Heart left ventricle (tissue), 16 donors: ENCODE measurements at regions of chr12 and their contacts with region 1.

Region 1: GRCh38 chr12:110742718-110743570 is at the start of gene PPP1CC:
- DNase-seq: peak; percentile 94 to 97 (median 96)
- ATAC-seq: peak; percentile 86 to 96 (median 94)
- H3K4me3 ChIP-seq: peak within 1 kb of the TSS; percentile 64 to 100 (median 97)
- H3K27ac ChIP-seq: peak within 1 kb of the TSS; percentile 83 to 97 (median 94)
- H3K4me1 ChIP-seq: peaks cover 2 to 66% (median 46%) of the 10 kb centered on the region in 12 donors
- H3K27me3 ChIP-seq: no peaks in the 10 kb centered on the region
- CTCF ChIP-seq: peak in 3 of 12 donors; percentile 10 to 40 (median 21)
- POLR2A ChIP-seq: peak in 1 of 2 donors; percentile 79
- total RNA-seq, gene PPP1CC: 110 to 207 (median 150) TPM

Region 2: DNA sequence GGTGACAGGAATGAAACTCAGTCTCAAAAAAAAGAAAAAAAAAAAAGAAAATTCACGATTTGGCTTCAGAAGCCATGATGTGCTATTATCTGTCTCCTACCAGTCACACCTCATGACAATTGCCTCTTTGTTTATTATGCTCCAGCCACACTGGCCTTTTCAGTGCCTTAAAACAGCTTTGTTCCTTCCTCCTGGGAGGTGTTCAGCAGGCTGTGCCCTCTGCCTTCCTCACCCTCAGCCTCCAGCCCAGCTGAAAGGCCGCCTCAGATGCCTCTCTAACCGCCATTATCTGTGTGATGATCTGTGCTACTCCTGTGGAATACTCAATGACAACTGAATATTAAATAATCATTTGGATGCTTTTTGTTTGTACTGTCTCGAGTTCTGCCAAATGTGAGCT is 284.2 kb before region 1 on chr12:
- intact Hi-C with region 1: loop called in 1 of 10 experiments (anchors 5 kb)
- DNase-seq: no peak
- ATAC-seq: no peak
- H3K4me3 ChIP-seq: no peak overlapping the region
- H3K27ac ChIP-seq: no peak overlapping the region
- H3K4me1 ChIP-seq: peaks cover 0 to 22% (median 0%) of the 10 kb centered on the region in 12 donors
- H3K27me3 ChIP-seq: no peaks in the 10 kb centered on the region
- CTCF ChIP-seq: no peak
- POLR2A ChIP-seq: no peak

Region 3: GRCh38 chr12:110613771-110614684 is 128.9 kb before region 1 on chr12 and contains the start of gene TCTN1:
- intact Hi-C with region 1: loop called in 2 of 10 experiments (anchors 1 to 5 kb)
- DNase-seq: peak; percentile 97 to 99 (median 98)
- ATAC-seq: peak; percentile 98 to 100 (median 100)
- H3K4me3 ChIP-seq: peak within 1 kb of the TSS; percentile 24 to 93 (median 65)
- H3K27ac ChIP-seq: peak within 1 kb of the TSS in 11 of 12 donors; percentile 47 to 82 (median 67)
- H3K4me1 ChIP-seq: peaks cover 0 to 15% (median 7%) of the 10 kb centered on the region in 12 donors
- H3K27me3 ChIP-seq: no peaks in the 10 kb centered on the region
- CTCF ChIP-seq: peak in 4 of 12 donors; percentile 10 to 28 (median 21)
- POLR2A ChIP-seq: peak in 1 of 2 donors; percentile 69
- total RNA-seq, gene TCTN1: 17.3 to 27.7 (median 20.2) TPM

Region 4: GRCh38 chr12:110689281-110690126 is 53.4 kb before region 1 on chr12:
- intact Hi-C with region 1: loop called in 1 of 10 experiments (anchors 10 kb)
- DNase-seq: peak; percentile 71 to 85 (median 75)
- ATAC-seq: peak; percentile 68 to 73 (median 71)
- H3K4me3 ChIP-seq: peak overlapping the region; percentile 59 to 87 (median 74)
- H3K27ac ChIP-seq: peak overlapping the region; percentile 1 to 88 (median 80)
- H3K4me1 ChIP-seq: peaks cover 5 to 74% (median 24%) of the 10 kb centered on the region in 12 donors
- H3K27me3 ChIP-seq: no peaks in the 10 kb centered on the region
- CTCF ChIP-seq: no peak
- POLR2A ChIP-seq: peak in 1 of 2 donors; percentile 30

Region 5: DNA sequence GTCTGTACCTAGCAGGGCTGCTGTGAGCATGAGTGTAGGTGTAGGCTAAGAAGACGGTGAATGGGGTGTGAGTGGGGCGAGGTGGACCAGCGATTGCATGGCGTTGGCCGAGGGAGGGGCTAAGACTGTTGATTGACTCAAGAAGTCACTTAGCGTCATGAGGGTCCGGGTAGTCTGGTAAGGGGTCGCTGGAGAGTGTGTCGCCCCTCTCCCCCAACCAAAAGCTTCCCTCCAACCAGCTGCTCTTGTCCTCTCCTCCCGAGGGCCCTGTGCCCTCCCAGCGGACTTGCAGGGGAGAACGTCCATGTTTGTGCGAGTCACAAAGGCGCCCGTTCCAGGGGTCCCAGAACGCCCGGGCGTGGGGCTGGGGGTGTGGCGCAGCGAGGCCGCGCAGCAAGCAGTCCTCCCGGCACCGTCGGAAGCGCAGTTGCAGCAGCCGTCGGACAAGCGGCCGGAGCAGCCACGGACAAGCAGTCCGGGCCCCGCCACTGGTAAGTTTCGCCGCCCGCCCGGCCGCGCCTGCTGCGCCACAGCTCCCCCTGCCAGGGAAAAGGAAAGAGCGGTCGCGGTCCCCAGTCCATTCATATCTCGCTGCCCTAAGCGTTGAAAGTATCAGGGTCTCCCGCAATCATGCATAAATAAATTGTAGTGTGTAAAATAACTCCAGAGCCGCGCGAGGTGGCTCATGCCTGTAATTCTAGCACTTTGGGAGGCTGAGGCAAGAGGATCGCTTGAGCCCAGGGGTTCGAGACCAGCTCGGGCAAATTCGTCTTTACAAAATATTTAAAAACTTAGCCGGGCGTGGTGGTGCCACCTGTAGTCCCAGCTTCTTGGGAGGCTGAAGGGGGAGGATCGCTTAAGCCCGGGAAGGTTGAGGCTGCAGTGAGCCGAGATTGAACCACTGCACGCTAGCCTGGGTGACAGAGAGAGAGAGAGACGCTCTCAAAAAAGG is 103.9 kb after region 1 on chr12 and contains the start of gene CCDC63:
- intact Hi-C with region 1: loop called in 1 of 10 experiments (anchors 5 kb)
- DNase-seq: peak; percentile 61 to 81 (median 70)
- ATAC-seq: peak in 3 of 4 donors; percentile 41 to 62 (median 57)
- H3K4me3 ChIP-seq: peak within 1 kb of the TSS in 9 of 12 donors; percentile 31 to 60 (median 37)
- H3K27ac ChIP-seq: peak within 1 kb of the TSS in 1 of 12 donors; percentile 52
- H3K4me1 ChIP-seq: peaks cover 0 to 18% (median 2%) of the 10 kb centered on the region in 12 donors
- H3K27me3 ChIP-seq: peaks cover 0 to 14% (median 0%) of the 10 kb centered on the region in 9 donors
- CTCF ChIP-seq: peak; percentile 24 to 71 (median 46)
- POLR2A ChIP-seq: no peak
- total RNA-seq, gene CCDC63: not detected

Region 6: GRCh38 chr12:111578274-111578970 is 835.5 kb after region 1 on chr12:
- intact Hi-C with region 1: no loop called
- DNase-seq: no peak
- ATAC-seq: peak in 1 of 4 donors; percentile 58
- H3K4me3 ChIP-seq: no peak overlapping the region
- H3K27ac ChIP-seq: no peak overlapping the region
- H3K4me1 ChIP-seq: peaks cover 0 to 44% (median 19%) of the 10 kb centered on the region in 12 donors
- H3K27me3 ChIP-seq: no peaks in the 10 kb centered on the region
- CTCF ChIP-seq: no peak
- POLR2A ChIP-seq: no peak